ENCODE measurements at regions of chr11 and their contacts with region 1.

Region 1: DNA sequence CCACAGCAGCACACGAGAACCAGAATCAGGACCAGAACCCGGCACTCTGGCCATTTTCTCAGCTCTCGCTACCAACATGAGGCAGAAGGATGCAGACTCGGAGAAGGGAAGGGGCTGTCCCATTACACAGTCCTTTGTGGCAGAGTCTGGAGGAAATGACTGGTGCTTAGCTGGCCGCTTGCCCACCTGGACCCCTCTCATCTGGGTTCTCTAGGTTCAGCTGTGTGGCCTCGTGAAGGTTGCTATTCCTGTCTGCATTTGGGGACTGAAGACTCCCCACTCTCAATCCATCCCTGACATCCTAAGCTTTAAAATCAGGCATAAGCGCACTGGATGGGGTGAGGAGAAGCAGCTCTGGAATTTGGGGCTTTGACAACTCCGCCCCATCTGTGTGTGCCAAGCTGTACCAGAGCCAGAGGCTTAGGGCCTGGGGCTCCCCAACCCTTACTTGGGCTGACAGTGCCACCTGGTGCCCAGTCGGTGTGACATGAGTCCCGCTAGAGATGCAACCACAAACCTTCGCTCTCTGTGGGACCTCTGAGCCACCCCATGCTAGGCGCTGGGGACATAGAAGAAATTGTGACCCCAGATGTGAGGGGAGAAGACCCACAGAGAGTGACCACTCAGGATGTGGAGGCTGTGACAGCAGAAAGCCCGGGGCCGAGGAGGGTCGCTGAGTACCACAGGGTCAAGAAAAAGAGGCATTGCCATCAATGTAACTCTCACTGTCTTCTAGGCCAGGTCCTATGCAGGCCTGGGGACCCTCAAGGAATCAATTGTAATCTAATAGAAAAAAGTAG is 35.9 kb upstream of the FCHSD2 start:
- DNase-seq: peak; percentile 90
- H3K4me3 ChIP-seq: no peak overlapping the region
- H3K27ac ChIP-seq: no peak overlapping the region
- H3K4me1 ChIP-seq: no peaks in the 10 kb centered on the region
- H3K27me3 ChIP-seq: no peaks in the 10 kb centered on the region
- CTCF ChIP-seq: peak; percentile 91

Region 2: GRCh38 chr11:72585762-72586311 is 592.1 kb before region 1 on chr11:
- CTCF ChIA-PET with region 1: no interaction called
- POLR2A ChIA-PET with region 1: no interaction called
- intact Hi-C with region 1: loop called (anchors 10 kb)
- DNase-seq: peak; percentile 77
- H3K4me3 ChIP-seq: no peak overlapping the region
- H3K27ac ChIP-seq: no peak overlapping the region
- H3K4me1 ChIP-seq: no peaks in the 10 kb centered on the region
- H3K27me3 ChIP-seq: peaks cover 37% of the 10 kb centered on the region
- CTCF ChIP-seq: peak; percentile 98

Region 3: DNA sequence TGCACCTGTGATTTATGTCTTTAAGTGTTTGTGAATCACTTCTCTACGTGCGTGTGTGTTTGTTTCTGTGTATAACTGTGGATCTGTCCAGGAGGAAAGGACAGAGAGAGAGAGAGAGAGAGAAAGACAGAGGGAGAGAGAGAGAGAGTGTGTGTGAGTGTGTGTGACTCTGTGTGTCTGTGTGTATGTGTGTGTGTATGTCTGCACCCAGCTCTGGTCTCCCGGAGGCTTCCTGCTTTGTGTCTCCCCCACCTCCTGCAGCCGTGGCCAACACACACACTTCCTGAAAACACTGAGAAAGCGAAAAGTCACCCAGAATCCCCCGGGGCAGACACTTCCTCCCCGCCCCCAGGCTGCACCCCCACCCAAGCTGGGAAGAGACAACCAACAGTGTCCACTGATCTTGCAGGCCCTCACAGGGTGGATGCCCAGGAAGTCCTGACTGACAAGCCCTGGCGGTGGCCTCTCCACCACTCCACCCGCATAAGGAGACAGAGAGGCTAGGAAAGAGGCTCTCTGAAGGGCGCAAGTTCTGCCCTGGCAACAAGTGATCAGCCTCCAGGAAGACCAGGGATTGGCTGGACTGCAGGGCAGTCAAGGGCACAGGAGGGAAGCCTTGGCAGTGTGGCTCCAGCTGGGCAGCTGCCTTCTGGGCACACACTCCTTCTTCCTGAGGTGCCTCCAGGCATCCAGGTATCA is 455.8 kb before region 1 on chr11:
- CTCF ChIA-PET with region 1: interaction called, 14 read pairs
- POLR2A ChIA-PET with region 1: no interaction called
- intact Hi-C with region 1: loop called (anchors 1 kb)
- DNase-seq: peak; percentile 92
- H3K4me3 ChIP-seq: peak overlapping the region; percentile 54
- H3K27ac ChIP-seq: peak overlapping the region; percentile 86
- H3K4me1 ChIP-seq: peaks cover 19% of the 10 kb centered on the region
- H3K27me3 ChIP-seq: no peaks in the 10 kb centered on the region
- CTCF ChIP-seq: no peak

Region 4: GRCh38 chr11:72831513-72832300 is 346.3 kb before region 1 on chr11:
- CTCF ChIA-PET with region 1: interaction called, 26 read pairs
- POLR2A ChIA-PET with region 1: no interaction called
- intact Hi-C with region 1: loop called (anchors 1 kb)
- DNase-seq: peak; percentile 90
- H3K4me3 ChIP-seq: no peak overlapping the region
- H3K27ac ChIP-seq: no peak overlapping the region
- H3K4me1 ChIP-seq: no peaks in the 10 kb centered on the region
- H3K27me3 ChIP-seq: no peaks in the 10 kb centered on the region
- CTCF ChIP-seq: peak; percentile 97

Region 5: DNA sequence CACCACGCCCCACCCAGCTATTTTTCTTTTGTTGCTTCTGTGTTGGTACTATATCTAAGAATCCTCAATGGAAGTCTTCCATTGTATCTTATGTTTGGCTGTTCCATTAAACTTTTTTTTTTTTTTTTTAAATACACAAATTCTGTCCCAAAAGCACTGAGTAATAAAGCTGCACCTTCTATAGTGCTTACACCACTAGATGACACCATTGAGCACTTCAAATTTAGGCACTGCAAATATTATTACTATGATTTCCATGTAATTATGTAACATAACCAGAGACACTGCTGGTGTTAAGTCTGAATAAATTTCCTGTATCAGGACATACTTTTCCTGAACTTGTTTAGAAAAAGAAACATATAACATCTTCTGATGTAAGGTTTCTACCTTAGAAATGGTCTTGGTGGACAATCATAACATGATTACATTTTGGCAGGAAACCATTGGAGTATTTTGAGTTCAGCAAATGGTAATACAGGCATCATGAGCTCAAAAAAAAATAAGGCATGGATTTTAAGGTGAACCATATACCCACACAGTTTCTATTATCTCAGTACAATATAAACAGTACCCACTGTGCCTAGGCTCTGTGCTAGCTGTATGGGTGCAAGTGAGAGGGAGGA is 253.3 kb before region 1 on chr11:
- CTCF ChIA-PET with region 1: interaction called, 14 read pairs
- POLR2A ChIA-PET with region 1: no interaction called
- intact Hi-C with region 1: loop called (anchors 2 kb)
- DNase-seq: peak; percentile 43
- H3K4me3 ChIP-seq: no peak overlapping the region
- H3K27ac ChIP-seq: no peak overlapping the region
- H3K4me1 ChIP-seq: peaks cover 3% of the 10 kb centered on the region
- H3K27me3 ChIP-seq: no peaks in the 10 kb centered on the region
- CTCF ChIP-seq: peak; percentile 74

Region 6: GRCh38 chr11:73047773-73048371 is 130.1 kb before region 1 on chr11:
- CTCF ChIA-PET with region 1: no interaction called
- POLR2A ChIA-PET with region 1: no interaction called
- intact Hi-C with region 1: no loop called
- DNase-seq: no peak
- H3K4me3 ChIP-seq: no peak overlapping the region
- H3K27ac ChIP-seq: no peak overlapping the region
- H3K4me1 ChIP-seq: peaks cover 8% of the 10 kb centered on the region
- H3K27me3 ChIP-seq: no peaks in the 10 kb centered on the region
- CTCF ChIP-seq: no peak

Region 7: DNA sequence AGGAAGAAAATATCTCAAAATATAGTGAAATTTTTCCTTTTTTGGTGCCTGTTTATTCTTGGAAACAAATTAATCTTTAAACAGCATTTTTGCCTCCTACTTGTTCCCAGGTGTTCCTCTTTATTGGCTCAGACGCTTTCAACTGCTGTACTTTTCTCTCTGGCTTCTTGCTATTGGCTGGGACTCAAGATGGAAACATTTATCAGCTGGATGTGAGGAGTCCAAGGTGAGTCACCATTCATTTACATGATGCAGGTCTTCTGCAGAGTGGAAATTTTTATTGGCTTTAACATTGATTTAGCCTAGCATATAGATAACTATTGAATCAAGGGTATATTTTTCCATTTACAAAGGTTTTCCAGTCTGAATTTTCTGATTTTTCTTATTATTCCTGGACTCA is 738.5 kb after region 1 on chr11:
- CTCF ChIA-PET with region 1: no interaction called
- POLR2A ChIA-PET with region 1: no interaction called
- intact Hi-C with region 1: no loop called
- DNase-seq: no peak
- H3K4me3 ChIP-seq: no peak overlapping the region
- H3K27ac ChIP-seq: no peak overlapping the region
- H3K4me1 ChIP-seq: no peaks in the 10 kb centered on the region
- H3K27me3 ChIP-seq: no peaks in the 10 kb centered on the region
- CTCF ChIP-seq: no peak